ENCODE measurements at regions of chr3 and their contacts with region 1.

Region 1: DNA sequence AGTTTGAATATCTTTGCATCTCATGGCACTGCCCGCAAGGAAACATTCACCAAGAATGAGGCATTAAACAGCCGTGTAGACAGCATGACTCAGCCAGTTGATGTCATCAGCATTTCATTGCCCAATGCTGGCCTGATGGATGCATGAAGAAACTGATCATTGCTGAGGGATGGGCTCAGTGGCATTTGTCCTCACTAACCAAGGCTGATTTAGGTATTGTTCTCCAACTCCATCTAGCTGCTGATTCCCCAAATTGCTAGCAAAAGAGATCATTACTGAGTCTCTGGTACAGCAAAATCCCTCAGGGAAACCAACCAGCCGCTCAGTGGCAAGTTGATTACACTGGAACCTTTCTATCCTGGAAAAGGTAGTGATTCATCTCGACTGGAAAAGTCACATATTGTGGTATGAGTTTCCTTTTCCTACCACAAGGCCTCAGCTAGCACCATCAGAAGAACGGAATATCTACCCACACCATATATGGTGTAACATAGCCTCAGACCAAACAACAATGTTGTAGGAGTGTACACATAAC is 186.5 kb upstream of the GAP43 start:
- DNase-seq: peak; percentile 97
- H3K4me3 ChIP-seq: no peak overlapping the region
- H3K27ac ChIP-seq: peak overlapping the region; percentile 55
- H3K4me1 ChIP-seq: peaks cover 18% of the 10 kb centered on the region
- H3K27me3 ChIP-seq: no peaks in the 10 kb centered on the region
- CTCF ChIP-seq: peak; percentile 50 to 67

Region 2: DNA sequence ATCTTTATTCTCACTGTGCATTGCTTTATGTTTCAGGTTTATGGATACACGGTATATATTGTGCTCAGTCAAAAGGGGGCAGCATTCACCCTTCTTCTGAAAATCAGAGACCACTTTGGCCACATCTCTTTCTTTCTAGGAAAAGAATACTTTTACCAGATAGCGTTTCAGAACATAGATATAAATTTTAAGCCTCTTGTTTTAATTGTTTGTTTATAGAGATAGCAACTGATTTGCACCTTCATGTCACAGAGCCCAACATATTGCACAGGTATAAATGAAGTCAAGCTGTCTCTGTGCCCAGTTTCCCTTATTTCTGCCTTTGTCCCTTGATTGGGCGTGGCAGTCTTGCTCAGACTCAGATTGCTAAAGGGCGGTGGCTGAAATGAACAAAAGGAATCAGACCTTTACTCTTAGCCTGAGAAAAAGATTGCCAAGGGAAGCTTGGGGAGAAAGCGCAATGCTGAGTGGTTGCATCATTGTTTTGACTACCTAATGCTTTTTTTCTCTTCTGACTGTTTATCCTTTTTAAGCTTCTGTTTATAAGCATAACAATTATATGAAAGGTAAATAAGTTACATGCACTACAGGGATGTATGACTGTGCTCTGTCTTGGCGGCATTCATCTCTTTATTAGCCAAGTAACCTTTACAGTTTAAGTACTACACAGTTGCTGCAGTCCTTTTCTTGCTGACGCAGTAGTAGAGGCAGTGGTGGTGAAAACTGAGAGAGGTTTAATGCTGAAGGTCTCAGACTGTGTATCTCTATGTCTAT is 219.0 kb before region 1 on chr3:
- CTCF ChIA-PET with region 1: no interaction called
- dilution Hi-C with region 1: no loop called
- in situ Hi-C with region 1: loop called in 1 of 2 experiments (anchors 25 kb)
- intact Hi-C with region 1: loop called (anchors 1 kb)
- DNase-seq: peak; percentile 56
- H3K4me3 ChIP-seq: no peak overlapping the region
- H3K27ac ChIP-seq: no peak overlapping the region
- H3K4me1 ChIP-seq: no peaks in the 10 kb centered on the region
- H3K27me3 ChIP-seq: no peaks in the 10 kb centered on the region
- CTCF ChIP-seq: peak; percentile 72

Region 3: GRCh38 chr3:115336836-115337235 is 100.0 kb before region 1 on chr3:
- CTCF ChIA-PET with region 1: no interaction called
- dilution Hi-C with region 1: no loop called
- in situ Hi-C with region 1: no loop called
- intact Hi-C with region 1: loop called (anchors 5 kb)
- DNase-seq: peak; percentile 47
- H3K4me3 ChIP-seq: no peak overlapping the region
- H3K27ac ChIP-seq: no peak overlapping the region
- H3K4me1 ChIP-seq: peaks cover 18% of the 10 kb centered on the region
- H3K27me3 ChIP-seq: no peaks in the 10 kb centered on the region
- CTCF ChIP-seq: no peak

Region 4: GRCh38 chr3:115448851-115449250 is 12.0 kb after region 1 on chr3:
- CTCF ChIA-PET with region 1: no interaction called
- dilution Hi-C with region 1: no loop called
- in situ Hi-C with region 1: no loop called
- intact Hi-C with region 1: no loop called
- DNase-seq: no peak
- H3K4me3 ChIP-seq: no peak overlapping the region
- H3K27ac ChIP-seq: no peak overlapping the region
- H3K4me1 ChIP-seq: no peaks in the 10 kb centered on the region
- H3K27me3 ChIP-seq: no peaks in the 10 kb centered on the region
- CTCF ChIP-seq: no peak